HepG2 (cell line): ENCODE measurements at regions of chr1 and their contacts with region 1.

Region 1: DNA sequence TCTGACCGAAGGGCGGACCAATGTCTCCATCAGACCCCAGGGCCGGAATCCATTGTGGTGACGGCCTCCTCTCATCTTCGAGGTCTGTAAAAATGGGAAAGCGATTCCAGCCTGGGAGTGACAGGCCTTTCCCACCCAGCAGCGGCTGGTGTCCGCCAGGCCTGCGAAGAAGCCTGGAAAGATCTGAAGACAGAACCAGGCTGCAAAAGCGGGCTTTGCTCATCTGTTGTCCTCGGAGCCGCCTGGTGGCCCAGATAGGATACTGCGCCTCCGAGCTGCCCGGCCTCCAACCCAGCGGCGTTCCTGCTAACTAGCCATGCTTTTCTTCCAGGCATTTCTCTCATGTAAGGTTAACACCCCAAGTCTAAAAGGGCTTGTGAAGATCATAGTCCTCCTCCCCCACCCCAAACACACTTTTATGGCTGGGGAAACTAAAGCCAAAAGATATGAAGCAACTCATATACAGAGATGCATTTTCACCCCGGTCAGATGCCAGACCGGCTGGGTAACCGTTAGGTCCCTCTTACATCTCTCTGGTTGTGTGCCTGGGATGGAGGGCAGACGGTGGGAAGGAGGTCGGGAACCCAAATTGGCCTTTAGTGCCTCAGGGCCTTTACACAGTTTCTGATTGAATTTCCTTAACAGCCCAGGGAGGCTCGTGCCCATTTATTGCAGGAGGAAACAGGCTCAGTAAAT is 1.9 kb upstream of the DHRS3 start:
- DNase-seq: peak; percentile 70
- ATAC-seq: peak; percentile 36
- H3K4me3 ChIP-seq: peak overlapping the region; percentile 91 to 97 (median 94)
- H3K27ac ChIP-seq: peak overlapping the region; percentile 94
- H3K4me1 ChIP-seq: peaks cover 36% of the 10 kb centered on the region
- H3K27me3 ChIP-seq: peaks cover 0 to 3% of the 10 kb centered on the region in 2 experiments; a peak in 1 of 5 replicates
- CTCF ChIP-seq: peak; percentile 94
- EP300 ChIP-seq: no peak
- POLR2A ChIP-seq: no peak
- RAD21 ChIP-seq: peak; percentile 97

Region 2: DNA sequence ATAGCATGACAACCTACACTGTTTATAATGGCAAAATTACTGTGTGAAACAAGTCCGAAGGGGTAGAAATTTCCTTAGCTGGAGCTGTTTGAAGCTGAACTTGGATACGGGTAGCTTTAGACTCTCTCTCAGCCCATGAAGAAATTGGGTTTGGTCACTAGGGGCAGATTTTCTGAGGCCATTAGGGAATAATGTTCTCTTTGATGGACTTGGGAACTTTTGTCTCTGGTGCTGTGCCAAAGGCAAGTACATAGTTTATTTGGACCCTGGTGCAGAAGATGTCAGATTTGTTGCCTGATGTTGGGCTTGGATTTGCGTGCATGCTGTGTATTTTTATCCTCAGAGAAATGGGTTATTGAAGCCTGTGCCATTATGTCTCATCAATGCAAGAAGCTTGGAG is 280.5 kb before region 1 on chr1:
- CTCF ChIA-PET with region 1: no interaction called
- POLR2A ChIA-PET with region 1: interaction called, 11 read pairs
- in situ Hi-C with region 1: no loop called
- intact Hi-C with region 1: no loop called
- DNase-seq: peak; percentile 62
- ATAC-seq: peak; percentile 71
- H3K4me3 ChIP-seq: no peak overlapping the region
- H3K27ac ChIP-seq: no peak overlapping the region
- H3K4me1 ChIP-seq: peaks cover 47% of the 10 kb centered on the region
- H3K27me3 ChIP-seq: no peaks in the 10 kb centered on the region
- CTCF ChIP-seq: peak; percentile 24; the same call in 1 of the 2 replicates
- EP300 ChIP-seq: no peak
- POLR2A ChIP-seq: no peak
- RAD21 ChIP-seq: no peak

Region 3: DNA sequence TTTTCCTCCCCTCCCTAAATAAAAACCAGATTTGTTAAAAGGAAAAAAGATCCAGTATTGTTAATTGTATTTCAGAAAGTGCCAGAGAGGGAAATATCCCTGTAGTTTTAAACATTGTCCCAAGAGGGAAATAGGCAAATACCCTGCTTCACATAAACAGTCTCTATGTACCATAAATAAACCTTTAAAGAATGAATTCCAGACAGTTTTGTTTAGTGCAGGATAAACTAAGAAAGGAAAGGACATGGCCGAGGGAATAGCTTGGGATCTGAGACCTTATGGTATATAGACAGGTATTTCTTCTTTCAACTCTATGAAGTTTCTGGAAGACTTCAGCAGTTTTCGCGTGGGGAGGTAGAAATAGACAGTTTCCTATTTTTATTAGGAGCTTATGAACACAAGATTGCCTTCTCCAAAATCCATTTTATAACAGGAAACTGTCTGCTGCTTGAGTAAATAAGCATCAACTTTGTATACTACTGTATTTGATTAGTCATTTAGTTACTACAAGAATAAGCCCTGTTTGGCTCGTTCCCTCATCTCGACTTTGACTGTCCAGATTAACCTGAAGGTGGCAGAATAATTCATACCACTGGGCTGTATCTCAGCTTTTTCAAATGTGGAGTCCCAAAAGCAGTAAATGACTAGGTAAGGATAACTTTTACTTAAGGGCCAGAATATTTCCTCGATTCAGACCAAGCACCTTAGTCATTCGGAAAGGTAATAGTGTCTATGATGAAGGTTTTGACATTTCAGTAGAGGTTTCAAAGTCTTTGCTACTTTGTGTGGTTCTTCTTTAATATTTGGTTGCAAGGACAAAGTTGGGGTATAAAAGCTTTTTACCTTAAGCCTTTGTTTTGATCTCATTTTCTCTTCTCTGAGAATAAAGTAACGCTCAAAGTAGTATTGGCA is 212.6 kb before region 1 on chr1:
- CTCF ChIA-PET with region 1: no interaction called
- POLR2A ChIA-PET with region 1: interaction called, 127 read pairs
- in situ Hi-C with region 1: no loop called
- intact Hi-C with region 1: loop called (anchors 1 kb)
- DNase-seq: peak; percentile 56
- ATAC-seq: peak; percentile 34; the same call in 1 of the 3 replicates
- H3K4me3 ChIP-seq: peak overlapping the region in 1 of 3 experiments; percentile 13; a peak in 2 of 6 replicates
- H3K27ac ChIP-seq: peak overlapping the region; percentile 76
- H3K4me1 ChIP-seq: peaks cover 82% of the 10 kb centered on the region
- H3K27me3 ChIP-seq: no peaks in the 10 kb centered on the region
- CTCF ChIP-seq: peak; percentile 66
- EP300 ChIP-seq: no peak
- POLR2A ChIP-seq: no peak
- RAD21 ChIP-seq: no peak

Region 4: DNA sequence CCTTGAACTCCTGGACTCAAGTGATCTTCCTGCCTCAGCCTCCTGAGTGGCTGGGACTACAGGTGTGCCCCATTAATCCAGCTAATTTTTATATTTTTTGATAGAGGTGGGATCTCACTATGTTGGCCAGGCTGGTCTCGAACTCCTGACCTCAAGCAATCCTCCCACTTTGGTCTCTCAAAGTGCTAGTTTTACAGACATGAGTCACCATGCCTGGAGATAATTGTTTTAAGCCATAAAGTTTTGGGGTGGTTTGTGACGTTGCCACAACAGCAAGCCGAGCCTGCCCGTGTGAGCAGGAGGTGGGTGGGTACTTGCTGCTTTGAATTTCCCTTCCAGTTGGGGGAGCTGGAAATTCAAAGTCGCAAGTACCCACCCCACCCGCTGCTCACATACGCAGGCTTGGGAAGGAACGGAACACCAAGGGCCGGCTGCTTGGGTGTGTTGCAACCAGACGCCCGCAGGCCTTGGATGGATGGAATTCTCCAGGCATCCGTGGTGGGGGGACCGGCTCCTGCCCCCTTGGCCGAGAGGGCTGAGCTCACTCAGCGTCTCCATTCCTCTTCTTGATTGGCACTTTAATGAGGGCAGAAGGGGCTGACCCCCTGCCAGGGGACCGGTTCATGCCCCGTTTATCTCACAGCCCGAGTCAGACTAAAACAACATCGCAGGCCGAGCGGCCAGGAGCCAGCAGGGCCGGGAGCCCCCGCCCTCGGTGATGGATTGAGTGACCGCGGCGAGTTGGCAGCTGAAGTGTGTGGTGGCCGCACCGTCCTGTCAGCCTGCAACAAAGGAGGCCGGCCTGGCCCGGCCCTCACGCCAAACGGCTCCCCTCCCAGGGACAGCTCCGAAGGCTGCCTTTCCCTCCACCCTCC is 80.0 kb before region 1 on chr1:
- CTCF ChIA-PET with region 1: no interaction called
- POLR2A ChIA-PET with region 1: interaction called, 18 read pairs
- in situ Hi-C with region 1: no loop called
- intact Hi-C with region 1: no loop called
- DNase-seq: peak; percentile 53
- ATAC-seq: peak; percentile 84
- H3K4me3 ChIP-seq: peak overlapping the region; percentile 42 to 69 (median 43)
- H3K27ac ChIP-seq: no peak overlapping the region
- H3K4me1 ChIP-seq: peaks cover 64% of the 10 kb centered on the region
- H3K27me3 ChIP-seq: peaks cover 0 to 17% of the 10 kb centered on the region in 2 experiments; a peak in 2 of 5 replicates
- CTCF ChIP-seq: peak; percentile 42
- EP300 ChIP-seq: no peak
- POLR2A ChIP-seq: no peak
- RAD21 ChIP-seq: no peak

Region 5: GRCh38 chr1:12587981-12588640 is 31.8 kb before region 1 on chr1:
- CTCF ChIA-PET with region 1: no interaction called
- POLR2A ChIA-PET with region 1: interaction called, 35 read pairs
- in situ Hi-C with region 1: no loop called
- intact Hi-C with region 1: no loop called
- DNase-seq: peak; percentile 78
- ATAC-seq: peak; percentile 70
- H3K4me3 ChIP-seq: no peak overlapping the region
- H3K27ac ChIP-seq: no peak overlapping the region
- H3K4me1 ChIP-seq: peaks cover 29% of the 10 kb centered on the region
- H3K27me3 ChIP-seq: no peaks in the 10 kb centered on the region
- CTCF ChIP-seq: no peak
- EP300 ChIP-seq: peak in 1 of 2 experiments; percentile 41; a peak in 1 of 4 replicates
- POLR2A ChIP-seq: no peak
- RAD21 ChIP-seq: no peak